Sigmoid colon (tissue), 7 donors: ENCODE measurements at regions of chr1 and their contacts with region 1.

Region 1: GRCh38 chr1:29202584-29203340 is 21.1 kb upstream of the SRSF4 start:
- DNase-seq: peak; percentile 98
- H3K4me3 ChIP-seq: no peak overlapping the region
- H3K27ac ChIP-seq: peak overlapping the region; percentile 79 to 87 (median 84)
- H3K4me1 ChIP-seq: peaks cover 0 to 13% (median 12%) of the 10 kb centered on the region in 4 donors
- H3K27me3 ChIP-seq: no peaks in the 10 kb centered on the region
- CTCF ChIP-seq: peak; percentile 89 to 96 (median 92)
- EP300 ChIP-seq: no peak
- POLR2A ChIP-seq: no peak

Region 2: DNA sequence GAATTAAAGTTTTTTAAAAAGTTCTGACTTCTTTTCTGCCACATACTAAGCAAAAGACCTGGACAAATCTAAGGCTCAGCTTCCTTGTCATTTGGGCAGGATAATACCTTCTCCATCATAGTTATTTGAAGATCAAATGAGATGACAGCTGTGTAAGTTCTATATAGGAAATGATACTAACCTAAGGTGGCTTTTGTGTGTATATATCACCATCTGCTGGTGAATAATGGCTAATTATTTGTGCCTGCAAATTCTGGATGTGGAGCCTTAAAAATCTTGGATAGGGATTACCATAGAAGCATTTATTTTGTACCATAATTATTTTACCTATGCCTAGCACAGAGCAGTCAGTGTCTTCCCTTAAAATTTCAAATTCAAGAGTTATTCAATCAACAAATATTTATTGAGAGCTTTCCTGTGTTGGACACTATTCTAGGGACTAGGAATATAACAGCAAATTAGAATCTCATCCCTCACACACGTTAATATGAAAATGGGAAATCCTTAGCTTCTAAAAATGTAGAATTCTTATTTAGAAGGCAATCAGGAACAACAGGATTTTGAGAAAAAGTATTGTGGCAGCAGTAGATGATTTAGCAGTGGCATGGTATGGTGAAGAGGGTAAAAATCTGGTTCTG is 168.8 kb before region 1 on chr1:
- intact Hi-C with region 1: loop called (anchors 5 kb)
- DNase-seq: no peak
- H3K4me3 ChIP-seq: no peak overlapping the region
- H3K27ac ChIP-seq: no peak overlapping the region
- H3K4me1 ChIP-seq: peaks cover 0 to 7% (median 0%) of the 10 kb centered on the region in 4 donors
- H3K27me3 ChIP-seq: no peaks in the 10 kb centered on the region
- CTCF ChIP-seq: peak; percentile 29 to 69 (median 64)
- EP300 ChIP-seq: no peak
- POLR2A ChIP-seq: no peak

Region 3: GRCh38 chr1:29181413-29182225 is 21.1 kb before region 1 on chr1 and contains the start of gene SRSF4:
- intact Hi-C with region 1: loop called (anchors 2 kb)
- DNase-seq: peak; percentile 100
- H3K4me3 ChIP-seq: peak within 1 kb of the TSS; percentile 80 to 97 (median 92)
- H3K27ac ChIP-seq: peak within 1 kb of the TSS; percentile 98 to 100 (median 99)
- H3K4me1 ChIP-seq: peaks cover 0 to 49% (median 46%) of the 10 kb centered on the region in 4 donors
- H3K27me3 ChIP-seq: no peaks in the 10 kb centered on the region
- CTCF ChIP-seq: peak in 3 of 4 experiments; percentile 50 to 66 (median 64)
- EP300 ChIP-seq: no peak
- POLR2A ChIP-seq: peak; percentile 18 to 35
- total RNA-seq, gene SRSF4: 80.3 to 110 (median 96.6) TPM

Region 4: GRCh38 chr1:29312469-29313466 is 110.0 kb after region 1 on chr1:
- intact Hi-C with region 1: no loop called
- DNase-seq: peak; percentile 37
- H3K4me3 ChIP-seq: no peak overlapping the region
- H3K27ac ChIP-seq: no peak overlapping the region
- H3K4me1 ChIP-seq: no peaks in the 10 kb centered on the region
- H3K27me3 ChIP-seq: no peaks in the 10 kb centered on the region
- CTCF ChIP-seq: no peak
- EP300 ChIP-seq: no peak
- POLR2A ChIP-seq: no peak

Region 5: GRCh38 chr1:30315185-30315960 is 1112.6 kb after region 1 on chr1:
- intact Hi-C with region 1: no loop called
- DNase-seq: no peak
- H3K4me3 ChIP-seq: no peak overlapping the region
- H3K27ac ChIP-seq: no peak overlapping the region
- H3K4me1 ChIP-seq: no peaks in the 10 kb centered on the region
- H3K27me3 ChIP-seq: peaks cover 0 to 41% (median 5%) of the 10 kb centered on the region in 3 donors
- CTCF ChIP-seq: no peak
- EP300 ChIP-seq: no peak
- POLR2A ChIP-seq: no peak